SK-N-SH (cell line): ENCODE measurements at regions of chr7 and their contacts with region 1.

Region 1: DNA sequence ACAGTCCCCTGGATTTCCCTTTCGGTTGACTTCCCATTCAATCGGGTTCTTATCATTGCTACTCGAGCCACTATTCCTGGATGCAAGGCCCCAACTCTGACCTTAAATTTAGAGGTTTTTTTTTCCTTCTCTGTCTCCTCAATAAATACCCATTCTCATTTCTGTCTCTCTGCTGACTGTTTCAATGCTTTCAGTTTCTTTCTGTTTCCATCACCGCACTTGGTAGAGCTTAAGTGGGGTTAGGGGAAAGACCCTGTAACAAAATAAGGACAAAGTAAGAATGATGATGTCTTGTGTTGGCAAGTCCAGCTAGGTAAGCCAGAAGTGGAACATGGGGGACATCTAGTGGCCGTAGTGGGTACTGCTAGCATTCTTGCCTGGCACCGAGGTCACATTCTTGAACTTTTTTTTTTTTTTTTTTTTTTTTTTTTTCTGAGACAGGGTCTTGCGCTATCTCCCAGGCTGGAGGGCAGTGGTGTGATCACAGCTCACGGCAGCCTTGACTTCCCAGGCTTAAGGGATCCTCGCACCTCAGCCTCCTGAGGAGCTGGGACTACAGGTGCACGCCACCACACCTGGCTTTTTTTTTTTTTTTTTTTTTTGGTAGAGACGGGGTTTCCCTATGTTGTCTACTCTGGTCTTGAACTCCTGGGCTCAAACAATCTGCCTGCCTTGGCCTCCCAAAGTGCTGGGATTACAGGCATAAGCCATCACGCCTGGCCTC is 40.3 kb downstream of the ZC3HC1 start:
- DNase-seq: peak; percentile 83
- H3K4me3 ChIP-seq: no peak overlapping the region
- H3K27ac ChIP-seq: peak overlapping the region; percentile 43 to 92; a peak in 3 of 4 replicates
- H3K4me1 ChIP-seq: peaks cover 12 to 20% of the 10 kb centered on the region in 2 experiments; a peak in 3 of 4 replicates
- H3K27me3 ChIP-seq: no peaks in the 10 kb centered on the region
- CTCF ChIP-seq: peak; percentile 98
- EP300 ChIP-seq: 0 out of 4 replicates have a peak, but pooled peaks of 1 of the 2 experiments have one; percentile 5
- RAD21 ChIP-seq: peak; percentile 98

Region 2: DNA sequence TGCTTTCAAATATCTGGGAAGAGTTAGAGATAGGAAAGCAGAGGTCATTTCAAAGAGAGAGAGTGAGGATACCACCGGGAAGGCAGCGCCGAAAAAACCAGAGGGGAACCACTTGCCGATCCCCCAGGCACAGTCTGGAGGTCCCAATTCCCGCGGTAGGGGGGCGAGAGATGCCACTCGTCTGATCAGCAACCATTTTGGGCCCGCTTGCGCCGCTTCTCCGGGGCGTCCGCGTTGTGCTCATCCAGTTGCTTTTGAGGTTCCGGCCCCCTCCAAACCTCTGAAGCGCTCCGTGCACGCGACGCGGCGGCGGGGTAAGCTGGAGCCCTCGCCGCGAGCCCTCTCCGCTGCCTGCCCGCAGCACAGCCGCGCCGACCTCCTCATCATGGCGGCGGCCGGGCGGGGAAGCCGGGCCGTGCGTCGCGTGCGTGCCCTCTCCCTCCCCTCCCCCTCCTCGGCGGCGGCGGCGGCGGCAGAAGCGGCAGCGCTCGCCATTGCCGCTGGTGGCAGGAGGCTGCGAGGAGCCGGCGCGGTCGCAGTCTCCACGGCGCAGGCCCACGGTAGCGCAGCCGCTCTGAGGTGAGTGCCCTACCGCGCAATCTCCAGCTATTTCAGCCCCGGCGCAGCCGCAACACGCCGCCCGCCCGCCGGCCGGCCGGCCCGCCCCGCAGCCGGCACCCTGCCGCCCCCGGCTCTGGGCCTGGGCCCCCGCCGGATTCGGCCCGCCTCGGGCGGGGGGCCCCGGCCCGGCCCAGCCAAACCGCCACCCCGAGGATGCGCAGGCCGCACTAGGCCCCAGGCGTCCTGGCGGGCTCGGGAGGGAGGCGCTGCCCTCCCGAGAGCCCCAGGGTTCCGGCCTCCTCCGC is 399.4 kb before region 1 on chr7 and contains the start of gene NRF1:
- CTCF ChIA-PET with region 1: interaction called, 11 read pairs
- POLR2A ChIA-PET with region 1: no interaction called
- DNase-seq: peak; percentile 98
- H3K4me3 ChIP-seq: peak within 1 kb of the TSS; percentile 79 to 95
- H3K27ac ChIP-seq: peak within 1 kb of the TSS; percentile 86 to 97
- H3K4me1 ChIP-seq: peaks cover 14 to 25% of the 10 kb centered on the region in 2 experiments
- H3K27me3 ChIP-seq: no peaks in the 10 kb centered on the region
- CTCF ChIP-seq: no peak
- EP300 ChIP-seq: peak in 1 of 2 experiments; percentile 92; a peak in 1 of 4 replicates
- RAD21 ChIP-seq: no peak
- polyA plus RNA-seq, gene NRF1: 10.9 and 16.9 TPM in 2 replicates

Region 3: DNA sequence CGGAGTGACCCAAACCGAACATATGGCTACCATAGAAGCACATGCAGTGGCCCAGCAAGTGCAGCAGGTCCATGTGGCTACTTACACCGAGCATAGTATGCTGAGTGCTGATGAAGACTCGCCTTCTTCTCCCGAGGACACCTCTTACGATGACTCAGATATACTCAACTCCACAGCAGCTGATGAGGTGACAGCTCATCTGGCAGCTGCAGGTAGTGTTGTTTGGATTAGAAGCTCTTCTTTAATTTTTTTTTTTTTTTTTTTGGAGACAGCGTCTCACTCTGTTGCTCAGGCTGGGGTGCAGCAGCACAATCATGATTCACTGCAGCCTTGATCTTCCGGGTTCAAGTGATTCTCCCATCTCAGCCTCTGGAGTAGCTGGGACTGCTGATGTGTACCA is 353.5 kb before region 1 on chr7:
- CTCF ChIA-PET with region 1: interaction called, 18 read pairs
- POLR2A ChIA-PET with region 1: interaction called, 4 read pairs
- DNase-seq: no peak
- H3K4me3 ChIP-seq: no peak overlapping the region
- H3K27ac ChIP-seq: no peak overlapping the region
- H3K4me1 ChIP-seq: no peaks in the 10 kb centered on the region
- H3K27me3 ChIP-seq: no peaks in the 10 kb centered on the region
- CTCF ChIP-seq: no peak
- EP300 ChIP-seq: no peak
- RAD21 ChIP-seq: no peak

Region 4: DNA sequence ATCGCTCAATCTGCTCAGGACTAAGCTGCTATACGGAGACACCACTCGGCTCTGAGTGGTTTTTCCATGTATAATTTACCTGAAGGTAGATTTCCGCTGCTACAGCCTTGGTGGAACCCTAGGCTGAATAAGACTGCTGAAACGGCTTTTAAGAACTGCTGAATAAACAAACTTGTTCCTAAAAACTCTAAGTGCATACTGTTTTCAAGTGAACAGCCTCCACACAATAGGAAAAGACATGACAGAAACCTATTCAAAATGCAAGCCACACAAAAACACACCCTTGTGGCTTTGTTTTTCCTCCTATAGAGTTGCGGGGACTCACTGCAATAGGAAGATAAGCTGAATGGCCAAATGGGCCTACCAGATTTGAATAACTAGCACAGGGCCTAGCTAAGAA is 175.3 kb before region 1 on chr7:
- CTCF ChIA-PET with region 1: interaction called, 162 read pairs
- POLR2A ChIA-PET with region 1: no interaction called
- DNase-seq: no peak
- H3K4me3 ChIP-seq: no peak overlapping the region
- H3K27ac ChIP-seq: peak overlapping the region in 1 of 2 experiments; percentile 31; a peak in 2 of 4 replicates
- H3K4me1 ChIP-seq: peaks cover 36 to 50% of the 10 kb centered on the region in 2 experiments
- H3K27me3 ChIP-seq: no peaks in the 10 kb centered on the region
- CTCF ChIP-seq: no peak
- EP300 ChIP-seq: no peak
- RAD21 ChIP-seq: no peak

Region 5: GRCh38 chr7:129952653-129953560 is 57.9 kb before region 1 on chr7 and contains the start of gene UBE2H:
- CTCF ChIA-PET with region 1: interaction called, 22 read pairs
- POLR2A ChIA-PET with region 1: no interaction called
- DNase-seq: peak; percentile 100
- H3K4me3 ChIP-seq: peak within 1 kb of the TSS; percentile 78 to 86
- H3K27ac ChIP-seq: peak within 1 kb of the TSS; percentile 90 to 97
- H3K4me1 ChIP-seq: peaks cover 8 to 14% of the 10 kb centered on the region in 2 experiments
- H3K27me3 ChIP-seq: no peaks in the 10 kb centered on the region
- CTCF ChIP-seq: no peak
- EP300 ChIP-seq: peak in 1 of 2 experiments; percentile 13; a peak in 1 of 4 replicates
- RAD21 ChIP-seq: peak; percentile 16; the same call in 1 of the 2 replicates
- polyA plus RNA-seq, gene UBE2H: 129 and 162 TPM in 2 replicates

Region 6: GRCh38 chr7:130021105-130021834 is 10.4 kb after region 1 on chr7:
- CTCF ChIA-PET with region 1: interaction called, 30 read pairs
- POLR2A ChIA-PET with region 1: no interaction called
- DNase-seq: no peak
- H3K4me3 ChIP-seq: no peak overlapping the region
- H3K27ac ChIP-seq: no peak overlapping the region
- H3K4me1 ChIP-seq: peaks cover 5 to 7% of the 10 kb centered on the region in 2 experiments
- H3K27me3 ChIP-seq: no peaks in the 10 kb centered on the region
- CTCF ChIP-seq: no peak
- EP300 ChIP-seq: no peak
- RAD21 ChIP-seq: no peak

Region 7: DNA sequence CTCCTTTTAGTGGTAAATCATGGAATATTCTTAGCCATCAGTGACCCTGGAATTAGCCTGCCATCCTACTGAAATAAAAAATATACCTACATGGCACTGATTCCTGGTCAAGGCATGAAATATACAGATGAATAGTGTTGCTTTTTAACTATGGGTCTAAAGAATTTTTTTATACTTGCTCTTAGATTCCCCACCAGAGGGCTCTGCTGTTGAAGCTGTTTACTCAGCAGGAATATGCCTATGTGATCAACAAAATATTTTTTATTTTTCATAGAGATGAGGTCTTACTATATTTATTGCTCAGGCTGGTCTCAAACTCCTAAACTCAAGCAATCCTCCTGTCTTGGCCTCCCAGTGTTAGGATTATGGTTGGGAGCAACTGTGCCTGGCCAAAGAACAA is 26.9 kb after region 1 on chr7:
- CTCF ChIA-PET with region 1: interaction called, 10 read pairs
- POLR2A ChIA-PET with region 1: no interaction called
- DNase-seq: no peak
- H3K4me3 ChIP-seq: no peak overlapping the region
- H3K27ac ChIP-seq: no peak overlapping the region
- H3K4me1 ChIP-seq: no peaks in the 10 kb centered on the region
- H3K27me3 ChIP-seq: no peaks in the 10 kb centered on the region
- CTCF ChIP-seq: peak; percentile 67
- EP300 ChIP-seq: no peak
- RAD21 ChIP-seq: peak; percentile 33; the same call in 1 of the 2 replicates